Ascending aorta (tissue), 2 donors: ENCODE measurements at regions of chr15 and their contacts with region 1.

Region 1: GRCh38 chr15:72473614-72474465 is at the start of gene ARIH1:
- DNase-seq: peak; percentile 86 to 98
- H3K4me3 ChIP-seq: peak within 1 kb of the TSS; percentile 73 to 100
- H3K27ac ChIP-seq: peak within 1 kb of the TSS; percentile 97 to 100
- H3K4me1 ChIP-seq: peaks cover 0 to 41% of the 10 kb centered on the region in 2 donors
- H3K27me3 ChIP-seq: no peaks in the 10 kb centered on the region
- CTCF ChIP-seq: peak in 2 of 3 experiments; percentile 8 to 22
- total RNA-seq, gene ARIH1: 109 TPM

Region 2: GRCh38 chr15:70853821-70854666 is 1619.8 kb before region 1 on chr15 and contains the start of gene LARP6:
- intact Hi-C with region 1: loop called (anchors 10 kb)
- DNase-seq: peak in 1 of 2 donors; percentile 78
- H3K4me3 ChIP-seq: peak within 1 kb of the TSS; percentile 79 to 93
- H3K27ac ChIP-seq: peak within 1 kb of the TSS; percentile 93 to 98
- H3K4me1 ChIP-seq: peaks cover 0 to 32% of the 10 kb centered on the region in 2 donors
- H3K27me3 ChIP-seq: no peaks in the 10 kb centered on the region
- CTCF ChIP-seq: peak in 1 of 3 experiments; percentile 17
- total RNA-seq, gene LARP6: 18.7 TPM

Region 3: DNA sequence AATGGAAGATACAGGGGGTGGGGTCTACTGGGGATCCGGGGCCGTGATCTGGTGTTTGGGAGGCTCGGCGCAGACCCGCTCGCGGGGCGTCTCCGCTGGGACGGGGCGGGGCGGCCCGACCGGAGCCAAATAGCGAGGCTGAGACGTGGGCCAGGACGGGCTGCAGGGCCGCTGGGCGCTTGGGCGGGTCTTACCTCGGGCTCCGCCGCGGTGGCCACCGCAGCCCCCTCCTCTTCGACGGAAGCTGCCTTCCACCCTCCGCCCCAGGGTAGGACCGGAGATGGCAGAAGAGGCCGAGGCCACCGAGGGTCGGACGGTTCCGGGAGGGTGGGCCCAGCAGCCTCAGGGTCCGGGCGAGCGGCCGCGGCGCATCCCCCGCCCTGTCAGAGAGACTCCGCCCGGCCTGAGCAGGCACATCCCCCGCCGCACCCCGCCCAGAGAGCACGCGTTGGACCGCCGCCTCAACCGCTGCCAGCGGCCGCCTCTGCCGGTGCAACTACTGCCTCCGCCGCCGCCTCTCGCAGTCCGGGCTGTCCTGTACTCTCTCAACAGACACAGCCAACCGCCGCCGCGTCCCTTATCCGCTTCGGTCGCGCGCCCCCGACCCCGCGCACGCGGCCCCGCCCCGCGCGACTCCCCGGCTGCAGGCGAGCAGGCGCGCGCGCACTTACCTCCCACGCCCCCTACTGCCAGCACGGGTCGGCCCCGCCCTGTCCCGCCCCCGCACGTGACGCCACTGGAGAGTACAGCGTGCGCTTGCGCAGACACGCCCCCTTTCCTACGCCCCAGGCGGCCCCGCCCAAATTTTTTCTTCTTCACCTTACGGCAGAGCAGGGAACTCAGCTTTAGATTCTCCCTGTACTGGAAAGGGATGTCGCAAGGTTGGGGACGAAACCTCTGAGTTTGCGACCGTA is 356.1 kb before region 1 on chr15 and contains the start of gene MYO9A:
- intact Hi-C with region 1: loop called (anchors 5 kb)
- DNase-seq: peak; percentile 84 to 99
- H3K4me3 ChIP-seq: peak within 1 kb of the TSS; percentile 74 to 87
- H3K27ac ChIP-seq: peak within 1 kb of the TSS; percentile 90 to 97
- H3K4me1 ChIP-seq: peaks cover 0 to 10% of the 10 kb centered on the region in 2 donors
- H3K27me3 ChIP-seq: no peaks in the 10 kb centered on the region
- CTCF ChIP-seq: no peak
- total RNA-seq, gene MYO9A: 128 TPM

Region 4: GRCh38 chr15:72272213-72273002 is 201.4 kb before region 1 on chr15 and contains the start of gene PARP6:
- intact Hi-C with region 1: loop called (anchors 5 kb)
- DNase-seq: peak; percentile 96 to 99
- H3K4me3 ChIP-seq: peak within 1 kb of the TSS; percentile 80 to 96
- H3K27ac ChIP-seq: peak within 1 kb of the TSS; percentile 88 to 94
- H3K4me1 ChIP-seq: peaks cover 0 to 11% of the 10 kb centered on the region in 2 donors
- H3K27me3 ChIP-seq: no peaks in the 10 kb centered on the region
- CTCF ChIP-seq: peak; percentile 60 to 73 (median 71)
- total RNA-seq, gene PARP6: 26.5 TPM

Region 5: DNA sequence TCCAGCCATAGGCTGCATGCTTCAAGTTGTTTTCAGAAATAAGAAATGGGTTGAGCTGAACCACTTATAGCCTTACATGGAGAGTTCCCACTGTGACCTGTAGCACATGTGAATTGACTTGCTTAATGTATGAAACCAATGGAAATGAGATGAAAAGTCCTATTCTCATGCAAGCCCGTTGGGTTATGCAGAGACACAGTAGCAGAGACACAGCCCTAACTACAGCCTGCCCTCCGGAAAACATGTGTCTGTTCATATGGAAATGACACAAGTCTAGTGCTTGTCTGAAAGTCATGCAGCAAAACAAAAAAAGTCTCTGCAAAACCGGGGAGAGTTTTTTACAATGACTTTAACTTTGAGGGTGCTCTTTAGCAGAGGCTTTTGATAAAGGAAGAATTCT is 197.7 kb after region 1 on chr15:
- intact Hi-C with region 1: loop called (anchors 5 kb)
- DNase-seq: no peak
- H3K4me3 ChIP-seq: no peak overlapping the region
- H3K27ac ChIP-seq: no peak overlapping the region
- H3K4me1 ChIP-seq: peaks cover 0 to 3% of the 10 kb centered on the region in 2 donors
- H3K27me3 ChIP-seq: no peaks in the 10 kb centered on the region
- CTCF ChIP-seq: no peak

Region 6: GRCh38 chr15:72685925-72686794 is 212.3 kb after region 1 on chr15 and contains the starts of genes BBS4 and HIGD2B:
- intact Hi-C with region 1: loop called (anchors 5 kb)
- DNase-seq: peak; percentile 53 to 94
- H3K4me3 ChIP-seq: peak within 1 kb of the TSS; percentile 59 to 77
- H3K27ac ChIP-seq: peak within 1 kb of the TSS; percentile 88 to 92
- H3K4me1 ChIP-seq: peaks cover 0 to 8% of the 10 kb centered on the region in 2 donors
- H3K27me3 ChIP-seq: no peaks in the 10 kb centered on the region
- CTCF ChIP-seq: no peak
- total RNA-seq, gene BBS4: 9.9 TPM
- total RNA-seq, gene HIGD2B: not detected

Region 7: GRCh38 chr15:73822998-73823397 is 1349.2 kb after region 1 on chr15:
- intact Hi-C with region 1: no loop called
- DNase-seq: no peak
- H3K4me3 ChIP-seq: no peak overlapping the region
- H3K27ac ChIP-seq: no peak overlapping the region
- H3K4me1 ChIP-seq: no peaks in the 10 kb centered on the region
- H3K27me3 ChIP-seq: no peaks in the 10 kb centered on the region
- CTCF ChIP-seq: no peak